ENCODE measurements at regions of chr1 and their contacts with region 1.

Region 1: DNA sequence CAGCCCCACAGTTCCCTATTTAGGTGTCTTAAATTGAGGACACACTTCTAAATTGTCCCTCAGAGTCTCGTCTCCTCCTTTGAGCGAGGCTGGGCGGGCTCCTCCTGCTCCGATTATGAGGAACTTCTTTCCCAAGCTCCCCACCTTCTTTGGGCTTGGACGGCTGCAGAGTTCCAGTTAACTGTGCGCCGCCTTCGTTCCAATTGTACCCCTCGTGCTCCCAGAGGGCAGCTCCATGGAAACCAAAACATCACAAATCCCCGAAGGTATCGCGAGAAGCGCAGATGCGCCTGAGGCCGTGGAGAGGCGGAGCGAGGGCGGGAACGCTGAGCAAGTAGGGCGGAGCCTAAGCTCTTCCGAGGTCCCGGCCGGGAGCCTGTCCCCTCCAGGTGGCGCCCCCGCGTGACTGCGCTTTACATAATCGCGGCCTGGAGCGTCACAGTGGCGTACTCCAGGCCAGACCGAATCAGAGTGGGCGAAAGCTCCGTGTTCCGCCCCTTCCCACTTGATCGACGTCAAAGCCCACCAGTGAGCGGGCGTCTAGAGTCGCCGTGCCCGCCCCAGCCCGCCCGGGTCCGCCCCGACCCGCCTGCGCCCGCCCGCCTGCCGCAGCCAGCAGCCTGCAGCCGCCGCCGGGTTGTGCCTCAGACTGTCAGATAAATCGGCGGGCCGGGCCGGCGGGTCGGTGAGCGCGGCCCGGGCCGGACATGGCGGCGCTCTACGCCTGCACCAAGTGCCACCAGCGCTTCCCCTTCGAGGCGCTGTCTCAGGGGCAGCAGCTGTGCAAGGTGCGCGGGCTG is at the start of gene FAM76A:
- DNase-seq: peak; percentile 100
- H3K4me3 ChIP-seq: peak within 1 kb of the TSS; percentile 86 to 97 (median 92)
- H3K27ac ChIP-seq: peak within 1 kb of the TSS; percentile 73
- H3K4me1 ChIP-seq: peaks cover 13% of the 10 kb centered on the region
- H3K27me3 ChIP-seq: no peaks in the 10 kb centered on the region
- CTCF ChIP-seq: peak; percentile 48 to 70
- POLR2A ChIP-seq: peak; percentile 49
- total RNA-seq, gene FAM76A: 11.9 and 12.8 TPM in 2 replicates

Region 2: GRCh38 chr1:26833432-26834405 is 891.9 kb before region 1 on chr1:
- CTCF ChIA-PET with region 1: no interaction called
- POLR2A ChIA-PET with region 1: no interaction called
- dilution Hi-C with region 1: no loop called
- intact Hi-C with region 1: no loop called
- DNase-seq: no peak
- H3K4me3 ChIP-seq: no peak overlapping the region
- H3K27ac ChIP-seq: no peak overlapping the region
- H3K4me1 ChIP-seq: no peaks in the 10 kb centered on the region
- H3K27me3 ChIP-seq: no peaks in the 10 kb centered on the region
- CTCF ChIP-seq: no peak
- POLR2A ChIP-seq: no peak

Region 3: GRCh38 chr1:27662707-27663393 is 62.7 kb before region 1 on chr1:
- CTCF ChIA-PET with region 1: interaction called, 10 read pairs
- POLR2A ChIA-PET with region 1: no interaction called
- dilution Hi-C with region 1: no loop called
- intact Hi-C with region 1: no loop called
- DNase-seq: peak; percentile 83
- H3K4me3 ChIP-seq: no peak overlapping the region
- H3K27ac ChIP-seq: no peak overlapping the region
- H3K4me1 ChIP-seq: peaks cover 14% of the 10 kb centered on the region
- H3K27me3 ChIP-seq: no peaks in the 10 kb centered on the region
- CTCF ChIP-seq: peak; percentile 80 to 85
- POLR2A ChIP-seq: no peak

Region 4: GRCh38 chr1:27772933-27773825 is 47.6 kb after region 1 on chr1 and contains the start of gene STX12:
- CTCF ChIA-PET with region 1: interaction called, 32 read pairs
- POLR2A ChIA-PET with region 1: interaction called, 18 read pairs
- dilution Hi-C with region 1: no loop called
- intact Hi-C with region 1: loop called (anchors 1 kb)
- DNase-seq: peak; percentile 100
- H3K4me3 ChIP-seq: peak within 1 kb of the TSS; percentile 63 to 99 (median 90)
- H3K27ac ChIP-seq: peak within 1 kb of the TSS; percentile 82
- H3K4me1 ChIP-seq: peaks cover 23% of the 10 kb centered on the region
- H3K27me3 ChIP-seq: no peaks in the 10 kb centered on the region
- CTCF ChIP-seq: no peak
- POLR2A ChIP-seq: peak; percentile 88
- total RNA-seq, gene STX12: 83.8 and 90.3 TPM in 2 replicates

Region 5: DNA sequence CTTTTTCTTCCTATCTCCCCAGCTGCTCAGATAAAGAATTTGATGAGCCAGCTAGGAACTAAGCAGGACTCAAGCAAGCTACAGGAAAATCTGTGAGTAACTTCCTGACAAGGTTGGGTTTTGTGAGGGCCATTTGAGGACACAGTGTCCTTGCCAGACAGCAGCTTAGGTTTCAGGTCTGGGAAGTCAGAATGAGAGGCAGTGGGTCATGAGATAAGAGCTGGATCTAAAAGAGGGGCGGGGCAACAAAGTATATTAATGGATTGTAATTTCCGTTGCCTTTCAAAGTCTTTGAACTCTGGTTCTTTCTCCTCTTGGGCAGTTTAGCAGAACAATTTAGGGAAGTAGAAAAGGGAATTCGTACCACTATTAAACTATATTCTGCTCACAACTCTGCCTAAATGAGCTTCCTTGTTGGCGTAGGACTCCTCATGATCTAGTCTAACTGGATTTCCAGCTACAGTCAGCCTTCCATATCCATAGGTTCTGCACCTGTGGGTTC is 64.0 kb after region 1 on chr1:
- CTCF ChIA-PET with region 1: interaction called, 10 read pairs
- POLR2A ChIA-PET with region 1: no interaction called
- dilution Hi-C with region 1: no loop called
- intact Hi-C with region 1: loop called (anchors 1 kb)
- DNase-seq: peak; percentile 92
- H3K4me3 ChIP-seq: peak overlapping the region in 1 of 3 experiments; percentile 7
- H3K27ac ChIP-seq: peak overlapping the region; percentile 79
- H3K4me1 ChIP-seq: peaks cover 37% of the 10 kb centered on the region
- H3K27me3 ChIP-seq: no peaks in the 10 kb centered on the region
- CTCF ChIP-seq: no peak
- POLR2A ChIP-seq: peak; percentile 19

Region 6: DNA sequence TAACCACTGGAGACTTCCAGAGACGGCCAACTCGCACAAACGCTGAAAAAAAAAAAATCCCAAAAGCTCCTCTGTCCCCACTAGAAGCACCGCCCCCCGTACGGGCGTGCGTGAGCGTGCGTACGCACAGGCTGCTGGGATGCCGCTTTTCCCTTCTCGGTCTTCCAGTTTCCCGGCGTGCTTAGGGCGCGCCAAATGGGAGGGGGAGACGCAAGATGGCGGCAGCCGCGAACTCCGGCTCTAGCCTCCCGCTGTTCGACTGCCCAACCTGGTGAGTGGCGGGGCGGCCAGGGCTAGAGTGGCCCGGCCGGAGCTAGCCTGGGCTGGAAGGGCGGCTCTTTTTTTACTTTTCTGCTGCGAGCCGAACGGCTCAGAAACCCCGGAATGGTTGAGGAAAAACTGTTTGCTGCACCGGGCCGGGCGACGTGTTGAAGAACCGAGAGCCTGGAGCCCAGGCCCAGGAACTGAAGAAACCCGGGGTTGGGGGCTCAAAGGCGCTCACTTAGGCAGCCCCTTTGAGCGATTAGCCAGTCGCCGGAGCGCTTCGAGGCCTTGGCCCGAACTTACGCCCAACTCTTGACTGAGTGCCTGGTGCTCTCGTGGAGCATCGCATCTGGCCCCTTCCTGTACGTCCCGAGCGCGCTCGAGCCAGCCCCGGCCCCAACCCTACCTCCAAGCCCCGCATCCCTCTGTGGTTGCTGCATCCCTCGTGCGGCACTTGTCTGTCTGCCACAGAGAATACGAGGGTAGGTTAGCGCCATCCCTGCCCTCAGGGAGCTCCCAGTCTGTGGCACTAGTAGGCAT is 105.2 kb after region 1 on chr1 and contains the start of gene PPP1R8:
- CTCF ChIA-PET with region 1: no interaction called
- POLR2A ChIA-PET with region 1: interaction called, 10 read pairs
- dilution Hi-C with region 1: no loop called
- intact Hi-C with region 1: loop called (anchors 1 kb)
- DNase-seq: peak; percentile 96
- H3K4me3 ChIP-seq: peak within 1 kb of the TSS; percentile 90 to 93 (median 92)
- H3K27ac ChIP-seq: peak within 1 kb of the TSS; percentile 86
- H3K4me1 ChIP-seq: peaks cover 19% of the 10 kb centered on the region
- H3K27me3 ChIP-seq: no peaks in the 10 kb centered on the region
- CTCF ChIP-seq: no peak
- POLR2A ChIP-seq: peak; percentile 97
- total RNA-seq, gene PPP1R8: 45.4 and 48.5 TPM in 2 replicates

Measured in endothelial cell of umbilical vein (primary cell).